Common myeloid progenitor, CD34-positive (primary cell): ENCODE measurements at regions of chr19 and their contacts with region 1.

Region 1: DNA sequence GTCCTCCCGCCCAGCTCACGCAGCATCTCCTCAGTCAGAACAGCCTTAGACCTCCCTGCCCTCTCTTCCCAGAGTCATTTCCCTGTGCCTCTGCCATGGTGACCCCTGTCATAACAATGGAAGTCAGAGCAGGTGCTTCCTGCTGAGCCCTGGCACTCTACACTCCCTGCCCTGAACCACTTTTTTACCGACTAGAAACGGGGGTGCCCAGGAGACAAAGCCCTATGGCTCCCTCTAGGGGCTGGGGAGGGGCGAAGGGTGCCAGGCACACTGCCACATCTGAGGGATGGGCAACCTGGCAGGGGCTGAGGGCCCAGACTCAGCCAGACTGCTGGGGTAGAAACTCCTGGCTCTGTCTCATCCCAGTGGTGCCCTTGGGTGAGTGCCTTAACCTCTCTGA is 16.4 kb downstream of the ZNF574 start:
- DNase-seq: peak; percentile 93 to 98 (median 97)
- H3K4me3 ChIP-seq: peak overlapping the region in 2 of 7 experiments; percentile 11 to 48
- H3K27ac ChIP-seq: peak overlapping the region; percentile 69 to 87
- H3K4me1 ChIP-seq: peaks cover 0 to 23% (median 8%) of the 10 kb centered on the region in 4 experiments
- H3K27me3 ChIP-seq: no peaks in the 10 kb centered on the region

Region 2: DNA sequence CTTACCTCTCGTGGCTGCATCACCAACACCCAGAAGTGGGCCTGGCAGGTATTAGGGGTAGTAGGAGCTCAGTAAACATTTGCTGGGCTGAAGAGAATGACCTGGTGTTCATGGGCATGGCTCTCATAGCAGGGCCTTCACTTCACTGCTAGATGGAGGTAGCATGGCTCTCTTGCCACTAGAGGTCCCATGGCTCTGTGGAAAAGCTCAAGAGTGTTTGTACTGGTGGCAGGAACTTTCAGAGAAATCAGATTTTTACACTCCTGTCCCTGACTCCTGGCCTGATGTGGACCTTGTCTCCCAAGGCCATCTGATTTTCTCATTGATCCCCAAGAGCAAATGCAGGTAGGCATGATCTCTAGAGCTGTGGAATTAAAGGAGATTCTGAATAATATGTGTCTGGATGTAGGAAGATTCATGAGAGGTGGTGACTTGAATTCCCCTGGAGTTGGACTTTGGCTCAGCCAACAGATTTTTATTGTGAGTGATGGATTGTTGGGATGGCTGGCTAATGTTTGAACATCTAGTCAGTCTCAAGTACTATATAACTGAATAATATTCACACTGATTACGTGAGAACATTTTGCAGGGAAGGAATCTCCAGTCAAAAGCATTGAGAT is 10.7 kb before region 1 on chr19:
- CTCF ChIA-PET with region 1: interaction called, 31 read pairs
- POLR2A ChIA-PET with region 1: interaction called, 5 read pairs
- DNase-seq: peak in 2 of 3 donors; percentile 73 to 75
- H3K4me3 ChIP-seq: no peak overlapping the region
- H3K27ac ChIP-seq: peak overlapping the region in 1 of 2 experiments; percentile 19
- H3K4me1 ChIP-seq: peaks cover 6 to 18% (median 16%) of the 10 kb centered on the region in 4 experiments
- H3K27me3 ChIP-seq: no peaks in the 10 kb centered on the region